ENCODE measurements at regions of chr14 and their contacts with region 1.

Region 1: DNA sequence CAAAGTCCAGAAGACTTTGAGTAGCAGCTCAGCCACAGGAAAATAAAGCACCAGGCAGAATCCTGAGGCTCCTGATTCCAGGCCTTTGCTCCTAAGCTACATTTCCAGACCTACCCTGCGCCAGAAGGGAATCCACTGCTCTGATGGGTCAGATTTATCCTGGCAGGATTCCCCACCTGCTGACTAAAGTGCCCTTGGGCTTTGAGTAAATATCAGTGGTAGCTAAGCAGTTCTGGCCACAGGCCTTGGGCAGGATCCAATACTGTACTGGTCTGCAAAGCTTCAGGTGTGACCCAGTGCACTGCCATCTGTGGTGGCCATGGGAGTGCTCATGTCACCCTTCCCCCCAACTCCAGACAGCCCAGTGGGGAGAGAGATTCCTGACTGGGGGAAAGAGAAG is 10.4 kb upstream of the ACOT1 start:
- DNase-seq: no peak
- ATAC-seq: peak; percentile 78
- H3K4me3 ChIP-seq: no peak overlapping the region
- H3K27ac ChIP-seq: no peak overlapping the region
- H3K4me1 ChIP-seq: peaks cover 2% of the 10 kb centered on the region; the same call in 1 of the 2 replicates
- H3K27me3 ChIP-seq: no peaks in the 10 kb centered on the region
- CTCF ChIP-seq: no peak

Region 2: DNA sequence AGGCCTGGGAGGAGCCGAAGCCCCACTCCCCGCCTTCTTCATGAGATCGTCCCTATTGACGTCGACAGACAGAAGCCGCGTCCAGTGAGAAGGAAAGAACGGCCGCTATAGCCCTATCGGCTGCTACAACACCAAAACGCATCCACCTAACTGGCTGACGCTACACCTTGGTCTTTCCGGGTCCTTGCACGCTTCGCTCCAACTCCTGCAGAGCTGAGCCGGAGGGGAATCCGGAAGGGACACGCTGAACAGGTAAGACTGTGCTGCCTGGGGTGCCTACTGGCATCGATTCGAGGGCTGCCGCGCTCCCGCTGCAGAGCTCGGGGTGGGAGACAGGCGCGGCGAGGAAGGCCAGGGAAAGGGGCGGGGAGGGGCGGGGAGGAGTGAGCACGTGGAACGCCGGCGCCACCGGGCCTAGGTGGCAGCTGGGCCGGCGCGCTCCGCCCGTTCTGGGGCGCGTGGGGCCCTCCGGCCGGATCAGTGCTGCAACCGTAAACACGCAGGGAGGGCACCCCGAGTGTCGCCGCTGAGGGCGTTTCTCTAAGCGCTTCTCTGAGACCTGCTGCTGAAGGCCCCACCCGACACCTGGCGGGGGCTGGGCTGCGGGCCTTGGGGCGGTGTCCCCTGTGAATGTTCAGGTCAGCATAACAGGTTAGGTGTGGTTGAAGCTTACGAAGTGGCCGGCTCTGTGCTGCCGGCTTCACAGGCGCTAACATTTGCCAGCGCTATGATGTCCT is 600.1 kb before region 1 on chr14 and contains the start of gene DCAF4:
- CTCF ChIA-PET with region 1: no interaction called
- POLR2A ChIA-PET with region 1: no interaction called
- in situ Hi-C with region 1: no loop called
- intact Hi-C with region 1: no loop called
- DNase-seq: peak; percentile 86
- ATAC-seq: peak; percentile 99
- H3K4me3 ChIP-seq: peak within 1 kb of the TSS; percentile 53 to 72
- H3K27ac ChIP-seq: peak within 1 kb of the TSS; percentile 80
- H3K4me1 ChIP-seq: no peaks in the 10 kb centered on the region; the same call in 1 of the 2 replicates
- H3K27me3 ChIP-seq: no peaks in the 10 kb centered on the region
- CTCF ChIP-seq: no peak
- total RNA-seq, gene DCAF4: 18.2 TPM

Region 3: GRCh38 chr14:73333031-73333430 is 193.5 kb before region 1 on chr14:
- CTCF ChIA-PET with region 1: no interaction called
- POLR2A ChIA-PET with region 1: no interaction called
- in situ Hi-C with region 1: no loop called
- intact Hi-C with region 1: no loop called
- DNase-seq: no peak
- ATAC-seq: no peak
- H3K4me3 ChIP-seq: no peak overlapping the region
- H3K27ac ChIP-seq: no peak overlapping the region
- H3K4me1 ChIP-seq: no peaks in the 10 kb centered on the region
- H3K27me3 ChIP-seq: no peaks in the 10 kb centered on the region
- CTCF ChIP-seq: no peak

Region 4: DNA sequence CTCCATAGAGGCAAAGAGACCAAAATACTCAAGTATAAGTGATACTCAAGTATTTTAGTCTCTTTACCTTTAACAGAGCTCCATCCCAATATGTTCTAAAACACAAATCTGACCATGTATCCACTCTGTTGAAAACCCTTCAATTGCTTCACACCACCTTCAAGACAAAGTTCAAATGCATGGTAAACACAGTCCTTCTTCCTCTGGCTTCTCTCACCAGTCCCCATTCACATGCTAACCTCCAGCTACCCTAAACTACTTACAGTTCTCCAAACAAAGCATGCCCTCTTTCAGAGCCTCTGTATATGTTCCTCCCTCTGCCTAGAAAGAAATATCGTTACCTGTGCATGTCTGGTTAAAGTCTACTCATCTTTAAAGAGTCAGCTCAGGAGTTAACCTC is 168.4 kb before region 1 on chr14:
- CTCF ChIA-PET with region 1: no interaction called
- POLR2A ChIA-PET with region 1: no interaction called
- in situ Hi-C with region 1: no loop called
- intact Hi-C with region 1: no loop called
- DNase-seq: no peak
- ATAC-seq: no peak
- H3K4me3 ChIP-seq: no peak overlapping the region
- H3K27ac ChIP-seq: no peak overlapping the region
- H3K4me1 ChIP-seq: no peaks in the 10 kb centered on the region
- H3K27me3 ChIP-seq: no peaks in the 10 kb centered on the region
- CTCF ChIP-seq: no peak

Region 5: DNA sequence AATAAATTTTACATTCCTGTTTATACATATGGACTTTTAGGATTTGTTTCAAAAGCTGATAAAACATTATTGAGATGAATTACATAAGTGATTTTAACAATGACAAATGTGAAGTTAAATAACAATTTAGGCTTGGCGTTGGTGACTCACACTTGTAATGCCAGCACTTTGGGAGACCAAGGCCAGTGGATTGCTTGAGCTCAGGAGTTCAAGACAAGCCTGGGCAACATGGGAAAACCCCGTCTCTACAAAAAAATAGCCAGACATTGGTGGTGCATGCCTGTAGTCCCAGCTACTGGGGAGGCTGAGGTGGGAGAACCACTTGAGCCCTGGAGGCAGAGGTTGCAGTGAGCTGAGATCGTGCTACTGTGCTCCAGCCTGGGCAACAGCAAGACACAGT is 49.8 kb after region 1 on chr14:
- CTCF ChIA-PET with region 1: no interaction called
- POLR2A ChIA-PET with region 1: interaction called, 18 read pairs
- in situ Hi-C with region 1: no loop called
- intact Hi-C with region 1: no loop called
- DNase-seq: no peak
- ATAC-seq: no peak
- H3K4me3 ChIP-seq: no peak overlapping the region
- H3K27ac ChIP-seq: no peak overlapping the region
- H3K4me1 ChIP-seq: no peaks in the 10 kb centered on the region
- H3K27me3 ChIP-seq: no peaks in the 10 kb centered on the region
- CTCF ChIP-seq: no peak

Region 6: DNA sequence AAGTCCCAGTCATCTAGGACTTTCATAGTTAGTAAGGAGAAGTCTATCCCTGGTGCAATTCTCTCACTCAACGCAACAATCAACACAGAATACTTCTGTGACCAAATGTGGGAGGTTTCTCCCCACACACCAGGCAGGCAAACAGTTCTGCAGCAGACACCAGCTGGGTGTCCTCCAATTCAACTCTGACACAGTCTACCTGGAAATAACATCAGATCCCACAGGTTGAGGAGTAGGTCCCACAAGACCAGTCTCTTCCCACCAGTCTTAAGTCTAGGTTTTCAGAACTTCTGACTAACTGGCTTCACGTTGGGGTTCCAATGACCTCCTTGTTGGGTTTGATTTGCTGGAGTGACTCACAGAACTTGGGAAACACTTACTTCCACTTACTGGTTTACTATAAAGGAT is 100.6 kb after region 1 on chr14:
- CTCF ChIA-PET with region 1: interaction called, 11 read pairs
- POLR2A ChIA-PET with region 1: no interaction called
- in situ Hi-C with region 1: no loop called
- intact Hi-C with region 1: no loop called
- DNase-seq: no peak
- ATAC-seq: no peak
- H3K4me3 ChIP-seq: no peak overlapping the region
- H3K27ac ChIP-seq: no peak overlapping the region
- H3K4me1 ChIP-seq: no peaks in the 10 kb centered on the region
- H3K27me3 ChIP-seq: no peaks in the 10 kb centered on the region
- CTCF ChIP-seq: no peak